ENCODE measurements at regions of chr16 and their contacts with region 1.

Region 1: GRCh38 chr16:89122322-89122851 is 28.7 kb downstream of the ACSF3 start:
- DNase-seq: peak; percentile 63 to 88 (median 83)
- ATAC-seq: peak; percentile 95
- H3K4me3 ChIP-seq: peak overlapping the region; percentile 9
- H3K4me3 Mint-ChIP-seq: peak overlapping the region; percentile 77
- H3K27ac ChIP-seq: peak overlapping the region in 1 of 2 donors; percentile 44
- H3K27ac Mint-ChIP-seq: peak overlapping the region; percentile 97
- H3K4me1 ChIP-seq: peaks cover 54% of the 10 kb centered on the region
- H3K4me1 Mint-ChIP-seq: peaks cover 61% of the 10 kb centered on the region
- H3K27me3 ChIP-seq: no peaks in the 10 kb centered on the region
- H3K27me3 Mint-ChIP-seq: no peaks in the 10 kb centered on the region
- CTCF ChIP-seq: no peak

Region 2: DNA sequence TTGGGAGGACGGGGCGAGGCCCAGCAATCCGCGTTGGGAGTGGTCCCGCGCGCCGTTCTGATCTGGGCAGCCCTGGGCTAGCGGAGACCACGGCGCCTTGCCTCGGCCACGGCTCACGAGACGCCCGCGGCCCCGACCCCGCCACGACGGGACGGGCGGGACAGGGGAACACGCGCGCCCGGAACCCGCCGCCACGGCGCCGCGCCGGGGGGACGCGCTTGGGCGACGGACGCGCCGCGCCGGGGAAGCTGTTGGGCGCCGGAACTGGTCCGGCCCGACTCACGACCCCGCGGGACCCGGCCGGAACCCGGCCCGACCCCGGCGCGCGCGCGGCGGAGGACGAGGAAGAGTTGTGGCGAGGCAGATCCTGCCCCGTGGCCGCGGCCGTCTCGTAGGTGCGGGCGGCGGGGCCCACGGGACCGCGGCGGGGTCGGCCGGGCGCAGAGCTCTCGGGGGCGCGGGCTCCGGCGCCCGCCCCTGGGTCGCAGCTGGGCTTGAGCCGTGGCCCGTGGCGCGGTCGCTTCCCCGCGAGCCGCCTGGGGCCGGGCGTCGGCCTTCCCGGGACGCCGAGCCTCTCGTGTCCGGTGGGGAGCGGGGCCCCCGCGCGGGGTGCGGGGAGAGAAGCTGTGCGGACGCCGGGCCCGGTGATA is 28.7 kb before region 1 on chr16 and contains the start of gene ACSF3:
- CTCF ChIA-PET with region 1: interaction called, 4 read pairs
- POLR2A ChIA-PET with region 1: interaction called, 27 read pairs
- intact Hi-C with region 1: loop called (anchors 1 to 2 kb)
- DNase-seq: peak; percentile 26 to 85 (median 58)
- ATAC-seq: peak; percentile 3
- H3K4me3 ChIP-seq: peak within 1 kb of the TSS; percentile 65
- H3K4me3 Mint-ChIP-seq: peak within 1 kb of the TSS; percentile 97
- H3K27ac ChIP-seq: peak within 1 kb of the TSS; percentile 24 to 37
- H3K27ac Mint-ChIP-seq: peak within 1 kb of the TSS; percentile 99
- H3K4me1 ChIP-seq: peaks cover 52% of the 10 kb centered on the region
- H3K4me1 Mint-ChIP-seq: peaks cover 48% of the 10 kb centered on the region
- H3K27me3 ChIP-seq: peaks cover 9 to 16% of the 10 kb centered on the region in 2 experiments
- H3K27me3 Mint-ChIP-seq: peaks cover 13% of the 10 kb centered on the region
- CTCF ChIP-seq: no peak
- total RNA-seq, gene ACSF3: 44.7 to 49.5 TPM

Measured in CD4-positive, alpha-beta T cell (primary cell).